AG04449 (cell line): ENCODE measurements at regions of chr17 and their contacts with region 1.

Region 1: GRCh38 chr17:58352014-58352842 is at the start of gene SUPT4H1:
- DNase-seq: peak; percentile 36
- H3K4me3 ChIP-seq: peak within 1 kb of the TSS; percentile 99
- CTCF ChIP-seq: no peak

Region 2: DNA sequence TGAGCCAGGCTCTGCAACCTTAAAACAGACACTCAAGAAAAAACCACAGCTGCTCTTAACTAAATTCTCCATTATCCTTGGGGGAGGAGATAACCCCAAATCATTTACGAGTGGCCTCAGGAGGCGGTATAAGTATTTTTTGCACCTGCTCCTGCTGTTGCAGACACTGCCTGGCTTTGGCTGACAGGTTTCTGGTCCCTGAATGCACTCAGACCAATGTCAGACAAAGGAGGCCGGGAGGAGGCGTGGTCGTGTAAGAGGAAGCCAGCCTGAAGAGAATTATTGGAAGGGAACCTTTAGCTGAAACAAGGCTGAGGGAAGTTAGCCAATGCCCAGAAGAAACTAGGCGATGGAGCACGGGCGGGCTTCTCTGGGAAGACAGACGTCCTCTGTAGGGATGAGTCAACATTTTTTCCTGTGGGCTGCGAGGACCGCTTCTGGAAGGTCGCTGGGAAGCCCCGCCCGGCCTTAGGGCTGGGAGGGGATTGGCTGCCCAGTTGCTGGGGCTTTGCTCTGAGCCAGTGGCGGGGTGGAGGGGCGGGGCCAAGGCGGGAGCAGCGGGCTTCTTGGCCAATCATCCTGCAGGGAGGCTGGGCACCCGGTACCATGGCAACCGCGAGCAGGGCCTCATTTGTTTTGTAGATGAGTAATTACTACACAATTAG is 689.5 kb before region 1 on chr17:
- CTCF ChIA-PET with region 1: no interaction called
- POLR2A ChIA-PET with region 1: no interaction called
- DNase-seq: peak; percentile 95
- H3K4me3 ChIP-seq: peak overlapping the region; percentile 34
- CTCF ChIP-seq: no peak

Region 3: GRCh38 chr17:58337600-58338453 is 14.4 kb before region 1 on chr17:
- CTCF ChIA-PET with region 1: interaction called, 28 read pairs
- POLR2A ChIA-PET with region 1: interaction called, 88 read pairs
- DNase-seq: peak; percentile 86
- H3K4me3 ChIP-seq: no peak overlapping the region
- CTCF ChIP-seq: no peak

Region 4: GRCh38 chr17:58364270-58364942 is 12.2 kb after region 1 on chr17:
- CTCF ChIA-PET with region 1: interaction called, 4 read pairs
- POLR2A ChIA-PET with region 1: interaction called, 11 read pairs
- DNase-seq: no peak
- H3K4me3 ChIP-seq: no peak overlapping the region
- CTCF ChIP-seq: no peak